Right ventricle myocardium superior (tissue), 1 donor: ENCODE measurements at regions of chr5 and their contacts with region 1.

Region 1: DNA sequence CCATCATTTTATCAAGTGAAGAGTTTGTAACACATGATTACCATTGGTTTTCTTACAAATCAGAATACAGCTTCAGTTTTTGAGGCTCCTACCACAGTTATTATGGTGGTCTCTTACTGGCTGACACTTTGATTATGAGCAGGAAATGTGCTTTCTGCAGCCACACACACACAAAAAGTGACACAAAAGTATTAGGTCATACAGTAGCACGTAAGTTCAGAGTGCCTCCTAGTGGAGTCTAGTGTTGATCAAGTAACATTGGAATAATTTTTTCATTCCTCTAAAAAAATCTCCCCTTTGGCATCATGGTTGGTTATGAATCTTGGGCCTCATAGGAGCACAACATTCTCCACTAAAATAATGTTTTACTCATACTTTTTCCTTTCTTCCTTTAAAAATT is 37.6 kb downstream of the PAM start:
- DNase-seq: no peak
- ATAC-seq: no peak

Region 2: GRCh38 chr5:102628441-102629175 is 164.1 kb before region 1 on chr5:
- intact Hi-C with region 1: no loop called
- DNase-seq: no peak
- ATAC-seq: peak; percentile 50

Region 3: DNA sequence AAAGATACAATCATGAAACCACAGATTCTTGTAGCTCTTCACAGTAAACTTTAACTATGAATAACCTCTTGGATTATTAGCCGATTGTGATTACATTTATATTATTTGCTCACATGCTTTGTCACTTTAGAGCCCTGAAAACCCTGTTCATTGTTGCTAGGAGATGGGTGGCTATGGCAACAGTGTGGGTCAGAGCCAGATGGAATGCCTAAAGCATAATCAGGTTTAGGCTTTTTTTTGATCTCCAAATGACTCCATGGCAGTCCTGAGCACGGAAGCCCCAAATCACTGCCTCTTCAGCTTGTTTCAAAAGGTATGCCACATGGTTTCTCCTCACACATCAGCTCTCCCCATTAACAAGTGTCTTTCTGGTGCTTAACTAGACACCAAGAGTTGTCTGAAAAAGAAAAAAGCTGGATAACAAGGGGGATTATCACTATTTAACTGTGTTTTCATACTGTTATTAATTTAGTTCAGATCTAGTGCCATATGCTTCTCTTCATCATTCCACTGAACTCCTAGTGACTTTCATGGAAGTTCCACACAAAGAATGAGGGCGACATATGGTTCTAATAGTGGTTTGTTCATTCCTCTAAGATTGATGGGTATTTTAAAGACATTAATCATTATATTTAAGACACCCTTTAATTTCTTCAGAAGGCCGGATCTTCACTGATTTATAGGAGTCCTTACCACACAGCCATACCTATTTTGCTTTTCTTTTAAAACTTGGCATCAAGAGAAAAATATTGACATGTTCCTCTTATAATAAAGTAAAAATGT is 126.3 kb before region 1 on chr5:
- intact Hi-C with region 1: no loop called
- DNase-seq: no peak
- ATAC-seq: no peak

Region 4: GRCh38 chr5:102865510-102866236 is 73.0 kb after region 1 on chr5:
- intact Hi-C with region 1: loop called (anchors 10 kb)
- DNase-seq: peak; percentile 85
- ATAC-seq: peak; percentile 93

Region 5: DNA sequence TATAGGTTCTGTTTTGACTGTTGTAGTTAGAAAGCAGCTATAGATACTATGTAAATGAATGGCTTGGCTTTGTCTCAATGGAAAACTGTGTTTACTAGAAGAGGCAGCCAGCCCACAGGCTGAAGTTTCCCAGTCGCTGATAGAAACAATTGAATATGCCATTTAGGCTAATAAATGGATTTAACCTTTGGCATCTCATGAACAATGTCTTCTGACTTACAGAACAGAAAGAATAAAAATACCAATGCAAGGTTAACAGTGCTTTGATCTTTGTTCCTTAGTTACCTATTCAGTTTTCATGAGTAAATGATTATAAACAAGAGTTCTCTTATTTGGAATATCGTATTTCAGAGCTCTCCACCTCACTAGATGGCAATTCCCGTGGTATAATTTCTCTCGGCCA is 83.0 kb after region 1 on chr5:
- intact Hi-C with region 1: no loop called
- DNase-seq: no peak
- ATAC-seq: no peak